Activated CD4-positive, alpha-beta T cell treated with anti-CD3 and anti-CD28 coated beads, Interleukin-2, amount 10 ng/mL, durations not matched to agents 7 days and 5 days (primary cell): ENCODE measurements at regions of chr3 and their contacts with region 1.

Region 1: GRCh38 chr3:48989796-48990635 is at the start of gene P4HTM:
- DNase-seq: peak; percentile 65
- H3K4me3 Mint-ChIP-seq: peak within 1 kb of the TSS; percentile 91
- H3K27ac Mint-ChIP-seq: peak within 1 kb of the TSS; percentile 95
- H3K4me1 Mint-ChIP-seq: peaks cover 56% of the 10 kb centered on the region
- H3K27me3 Mint-ChIP-seq: no peaks in the 10 kb centered on the region
- total RNA-seq, gene P4HTM: 45.3 to 47.6 TPM

Region 2: DNA sequence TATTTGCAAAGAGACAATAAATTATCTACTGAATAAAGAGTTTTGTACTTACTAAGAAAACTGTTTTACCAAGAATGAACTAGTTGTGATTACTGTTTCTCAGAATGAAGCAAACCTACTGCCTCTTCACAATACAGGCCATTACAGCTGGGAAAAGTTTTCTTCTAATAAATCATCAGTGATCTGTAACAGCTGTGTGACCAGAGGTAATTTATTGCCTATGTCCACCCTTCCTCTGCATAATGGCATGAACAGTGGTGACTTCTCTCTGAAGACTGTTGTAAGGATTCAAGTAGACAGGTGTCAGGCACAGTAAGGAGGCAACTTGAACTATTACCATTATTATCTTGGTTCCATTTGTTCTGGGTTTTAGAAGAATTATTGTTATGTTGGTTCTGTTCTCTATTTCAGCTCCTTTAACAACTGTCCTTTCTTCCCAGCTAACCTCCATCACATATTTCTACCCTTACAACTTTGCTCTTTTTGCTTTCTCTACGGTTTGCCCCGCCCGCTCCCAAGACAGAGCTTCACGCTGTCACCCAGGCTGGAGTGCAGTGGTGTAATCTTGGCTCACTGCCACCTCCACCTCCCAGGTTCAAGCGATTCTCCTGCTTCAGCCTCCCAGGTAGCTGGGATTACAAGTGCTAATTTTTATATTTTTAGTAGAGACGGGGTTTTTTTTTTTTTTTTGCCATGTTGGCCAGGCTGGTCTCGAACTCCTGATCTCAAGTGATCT is 193.9 kb before region 1 on chr3:
- CTCF ChIA-PET with region 1: no interaction called
- POLR2A ChIA-PET with region 1: no interaction called
- DNase-seq: no peak
- H3K4me3 Mint-ChIP-seq: no peak overlapping the region
- H3K27ac Mint-ChIP-seq: no peak overlapping the region
- H3K4me1 Mint-ChIP-seq: peaks cover 5% of the 10 kb centered on the region
- H3K27me3 Mint-ChIP-seq: no peaks in the 10 kb centered on the region

Region 3: DNA sequence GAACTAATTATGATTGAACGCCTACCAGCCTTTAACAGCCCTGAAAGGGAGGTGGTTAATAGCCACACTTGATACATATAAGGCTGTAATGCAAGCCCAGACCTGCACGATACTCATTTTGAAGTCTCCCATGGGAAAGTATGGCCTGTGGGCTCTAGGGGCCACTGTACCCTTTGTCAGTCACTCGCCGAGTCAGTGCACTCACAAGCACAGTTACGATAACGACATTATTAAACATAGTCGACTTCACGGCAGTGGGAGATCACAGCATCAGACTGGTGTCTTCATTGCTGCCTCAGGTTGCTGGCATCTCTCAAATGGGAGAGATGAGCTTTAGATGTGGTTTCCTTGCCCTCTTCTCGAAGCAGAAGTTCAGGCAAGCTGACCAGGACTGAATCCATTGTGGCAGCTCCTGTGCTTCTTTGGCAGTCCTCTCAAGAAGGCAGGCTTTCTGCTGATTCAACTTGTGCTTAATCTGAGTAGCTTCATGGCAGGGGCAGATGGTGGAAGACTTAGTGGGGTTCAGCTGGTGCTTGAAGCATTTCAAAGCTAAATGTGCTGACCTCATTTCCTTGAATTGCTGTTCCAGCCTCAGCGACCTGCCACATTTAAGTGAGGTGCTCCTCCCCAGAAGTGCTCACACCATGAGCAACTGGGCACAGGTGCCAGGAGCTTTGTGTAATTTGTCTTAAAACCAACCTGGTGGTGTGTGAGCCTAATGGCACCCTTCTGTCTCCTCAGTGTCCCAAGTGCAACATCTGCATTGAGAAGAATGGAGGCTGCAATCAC is 15.7 kb before region 1 on chr3:
- CTCF ChIA-PET with region 1: interaction called, 17 read pairs
- POLR2A ChIA-PET with region 1: no interaction called
- DNase-seq: no peak
- H3K4me3 Mint-ChIP-seq: no peak overlapping the region
- H3K27ac Mint-ChIP-seq: peak overlapping the region; percentile 78
- H3K4me1 Mint-ChIP-seq: peaks cover 14% of the 10 kb centered on the region
- H3K27me3 Mint-ChIP-seq: no peaks in the 10 kb centered on the region

Region 4: GRCh38 chr3:49007068-49007770 is 17.2 kb after region 1 on chr3 and contains the start of gene WDR6:
- CTCF ChIA-PET with region 1: interaction called, 33 read pairs
- POLR2A ChIA-PET with region 1: interaction called, 9 read pairs
- DNase-seq: peak; percentile 98
- H3K4me3 Mint-ChIP-seq: peak within 1 kb of the TSS; percentile 99
- H3K27ac Mint-ChIP-seq: peak within 1 kb of the TSS; percentile 100
- H3K4me1 Mint-ChIP-seq: peaks cover 37% of the 10 kb centered on the region
- H3K27me3 Mint-ChIP-seq: no peaks in the 10 kb centered on the region
- total RNA-seq, gene WDR6: 144 to 157 TPM

Region 5: DNA sequence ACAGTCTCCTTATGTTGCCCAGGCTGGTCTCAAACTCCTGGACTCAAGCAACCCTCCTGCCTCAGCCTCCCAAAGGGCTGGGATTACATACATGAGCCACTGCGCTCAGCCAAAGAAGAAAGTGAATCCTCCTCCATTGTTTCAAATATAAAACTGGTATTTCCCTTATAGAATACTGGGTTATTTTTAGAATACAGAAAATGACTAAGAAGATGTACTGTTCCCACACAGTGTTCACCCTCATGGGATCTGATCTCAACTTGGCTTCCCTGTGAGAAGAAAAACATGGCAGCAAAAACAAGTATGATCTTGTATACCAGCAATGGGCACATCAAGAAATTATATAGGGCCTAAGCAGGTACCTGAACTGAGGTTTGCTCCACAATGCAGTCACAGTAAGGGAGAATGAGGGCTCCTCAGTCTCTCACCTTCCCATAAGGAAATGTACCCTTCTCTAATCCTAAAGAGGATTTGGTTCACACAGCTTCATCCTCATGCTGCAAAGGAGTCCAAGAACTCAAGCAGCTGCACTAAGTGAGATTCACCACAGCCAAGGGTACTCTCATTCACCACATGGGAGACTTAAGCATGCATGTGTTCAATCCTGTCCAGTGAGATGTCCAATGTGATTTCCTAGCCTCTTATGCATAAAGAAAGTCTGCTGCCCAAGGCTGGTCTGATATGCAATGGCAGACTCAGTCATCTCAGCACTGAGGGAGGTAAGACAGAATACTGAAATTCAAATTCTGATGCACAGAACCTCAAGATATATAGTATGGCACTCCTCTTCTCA is 324.1 kb after region 1 on chr3:
- CTCF ChIA-PET with region 1: no interaction called
- POLR2A ChIA-PET with region 1: no interaction called
- DNase-seq: no peak
- H3K4me3 Mint-ChIP-seq: no peak overlapping the region
- H3K27ac Mint-ChIP-seq: no peak overlapping the region
- H3K4me1 Mint-ChIP-seq: no peaks in the 10 kb centered on the region
- H3K27me3 Mint-ChIP-seq: no peaks in the 10 kb centered on the region